Upper lobe of right lung (tissue), 1 donor: ENCODE measurements at regions of chr3 and their contacts with region 1.

Region 1: DNA sequence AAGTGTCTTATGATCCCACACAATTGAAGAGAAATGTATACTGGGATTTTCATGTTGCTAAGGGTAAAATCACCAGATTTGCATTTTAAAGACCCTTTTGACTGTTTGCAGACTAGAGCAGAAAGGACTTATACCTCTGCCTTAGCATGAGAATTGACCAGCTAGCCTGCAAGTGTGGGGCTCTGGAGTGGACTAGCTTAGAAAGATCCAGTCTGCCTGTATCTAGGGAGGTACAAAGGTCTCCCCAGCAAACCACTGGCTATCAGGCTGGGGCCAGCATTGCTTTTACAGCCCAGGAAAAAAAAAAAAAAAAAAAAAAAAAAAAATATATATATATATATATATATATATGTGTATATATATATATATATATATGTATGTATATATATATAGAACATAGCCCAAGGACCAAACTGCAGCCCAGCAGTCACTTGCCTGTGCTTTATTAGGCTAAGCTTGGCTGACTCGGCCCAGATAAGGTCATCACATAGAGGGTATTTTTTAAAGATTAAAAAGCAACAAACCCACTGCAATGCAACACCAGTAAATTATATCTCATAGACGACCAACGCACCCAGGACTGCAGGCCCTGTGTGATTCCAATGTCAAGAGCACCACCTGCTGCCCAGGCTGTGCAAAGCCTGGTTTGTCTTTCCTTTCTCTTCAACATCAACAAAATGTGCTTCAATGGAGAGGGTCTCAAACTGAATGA is 63.7 kb downstream of the DCLK3 start:
- DNase-seq: peak; percentile 72
- ATAC-seq: peak; percentile 89
- H3K4me3 ChIP-seq: no peak overlapping the region
- H3K27ac ChIP-seq: no peak overlapping the region
- H3K4me1 ChIP-seq: no peaks in the 10 kb centered on the region
- H3K27me3 ChIP-seq: no peaks in the 10 kb centered on the region
- CTCF ChIP-seq: peak; percentile 83

Region 2: GRCh38 chr3:35954413-35954812 is 746.3 kb before region 1 on chr3:
- intact Hi-C with region 1: loop called (anchors 10 kb)
- DNase-seq: no peak
- ATAC-seq: no peak
- H3K4me3 ChIP-seq: no peak overlapping the region
- H3K27ac ChIP-seq: no peak overlapping the region
- H3K4me1 ChIP-seq: no peaks in the 10 kb centered on the region
- H3K27me3 ChIP-seq: no peaks in the 10 kb centered on the region
- CTCF ChIP-seq: no peak

Region 3: DNA sequence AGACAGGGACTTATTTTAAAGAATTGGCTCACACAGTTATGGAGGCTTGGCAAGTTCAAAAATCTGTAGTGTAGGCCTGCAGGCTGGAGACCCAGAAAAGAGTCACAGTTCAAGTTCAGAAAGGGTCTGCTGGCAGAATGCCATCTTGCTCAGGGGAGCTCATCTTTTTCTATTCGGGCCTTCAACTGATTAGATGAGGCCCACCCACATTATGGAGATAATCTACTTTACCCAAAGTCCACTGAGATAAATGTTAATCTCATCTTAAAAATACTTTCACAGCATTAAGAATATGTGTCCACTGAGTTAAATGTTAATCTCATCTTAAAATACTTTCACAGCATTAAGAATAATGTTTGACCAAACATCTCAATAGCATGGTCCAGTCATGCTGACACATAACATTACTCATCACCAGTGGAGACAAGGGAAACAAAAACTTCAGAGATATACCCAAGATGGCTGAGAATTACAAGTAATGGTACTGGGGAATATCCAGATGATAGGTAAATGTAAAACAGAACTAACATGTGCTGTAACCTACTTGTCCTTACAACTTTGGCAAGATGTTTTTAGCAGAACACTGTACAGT is 394.7 kb before region 1 on chr3:
- intact Hi-C with region 1: no loop called
- DNase-seq: no peak
- ATAC-seq: no peak
- H3K4me3 ChIP-seq: no peak overlapping the region
- H3K27ac ChIP-seq: no peak overlapping the region
- H3K4me1 ChIP-seq: no peaks in the 10 kb centered on the region
- H3K27me3 ChIP-seq: no peaks in the 10 kb centered on the region
- CTCF ChIP-seq: no peak

Region 4: GRCh38 chr3:36557021-36557707 is 143.5 kb before region 1 on chr3:
- intact Hi-C with region 1: no loop called
- DNase-seq: no peak
- ATAC-seq: no peak
- H3K4me3 ChIP-seq: no peak overlapping the region
- H3K27ac ChIP-seq: no peak overlapping the region
- H3K4me1 ChIP-seq: no peaks in the 10 kb centered on the region
- H3K27me3 ChIP-seq: no peaks in the 10 kb centered on the region
- CTCF ChIP-seq: no peak

Region 5: DNA sequence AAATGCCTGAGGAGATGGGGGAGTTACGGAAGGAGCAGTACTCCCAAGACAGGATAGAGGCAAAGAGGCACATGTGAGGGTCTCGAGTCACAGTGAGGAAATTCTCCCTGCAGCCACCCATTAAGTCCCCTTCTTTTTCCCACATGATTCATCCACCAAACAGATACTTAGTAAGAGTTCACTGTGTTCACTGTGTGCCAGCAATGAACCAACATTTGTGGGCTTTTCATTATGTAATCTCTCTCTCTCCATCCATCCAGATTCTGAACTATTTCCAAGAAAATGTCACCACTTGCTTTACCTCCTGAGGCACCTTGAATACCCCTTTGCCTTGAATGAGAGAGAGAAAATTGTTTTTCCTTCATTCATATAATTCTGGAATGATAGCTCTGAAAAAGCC is 498.3 kb after region 1 on chr3:
- intact Hi-C with region 1: no loop called
- DNase-seq: no peak
- ATAC-seq: no peak
- H3K4me3 ChIP-seq: no peak overlapping the region
- H3K27ac ChIP-seq: no peak overlapping the region
- H3K4me1 ChIP-seq: no peaks in the 10 kb centered on the region
- H3K27me3 ChIP-seq: no peaks in the 10 kb centered on the region
- CTCF ChIP-seq: no peak